ENCODE measurements at regions of chr1 and their contacts with region 1.

Region 1: GRCh38 chr1:218135371-218135770 is 149.7 kb upstream of the RRP15 start:
- DNase-seq: no peak
- ATAC-seq: no peak
- H3K4me3 ChIP-seq: no peak overlapping the region
- H3K4me3 Mint-ChIP-seq: no peak overlapping the region
- H3K27ac ChIP-seq: no peak overlapping the region
- H3K27ac Mint-ChIP-seq: no peak overlapping the region
- H3K4me1 ChIP-seq: no peaks in the 10 kb centered on the region
- H3K4me1 Mint-ChIP-seq: no peaks in the 10 kb centered on the region
- H3K27me3 ChIP-seq: no peaks in the 10 kb centered on the region
- H3K27me3 Mint-ChIP-seq: no peaks in the 10 kb centered on the region
- CTCF ChIP-seq: no peak

Region 2: GRCh38 chr1:217955723-217956122 is 179.6 kb before region 1 on chr1:
- CTCF ChIA-PET with region 1: no interaction called
- POLR2A ChIA-PET with region 1: no interaction called
- intact Hi-C with region 1: no loop called
- DNase-seq: no peak
- ATAC-seq: no peak
- H3K4me3 ChIP-seq: no peak overlapping the region
- H3K4me3 Mint-ChIP-seq: no peak overlapping the region
- H3K27ac ChIP-seq: no peak overlapping the region
- H3K27ac Mint-ChIP-seq: no peak overlapping the region
- H3K4me1 ChIP-seq: no peaks in the 10 kb centered on the region
- H3K4me1 Mint-ChIP-seq: no peaks in the 10 kb centered on the region
- H3K27me3 ChIP-seq: no peaks in the 10 kb centered on the region
- H3K27me3 Mint-ChIP-seq: no peaks in the 10 kb centered on the region
- CTCF ChIP-seq: no peak

Region 3: GRCh38 chr1:218165701-218166114 is 30.3 kb after region 1 on chr1:
- CTCF ChIA-PET with region 1: no interaction called
- POLR2A ChIA-PET with region 1: no interaction called
- intact Hi-C with region 1: loop called in 1 of 2 experiments (anchors 1 kb)
- DNase-seq: no peak
- ATAC-seq: no peak
- H3K4me3 ChIP-seq: peak overlapping the region; percentile 16 to 27
- H3K4me3 Mint-ChIP-seq: peak overlapping the region; percentile 67
- H3K27ac ChIP-seq: no peak overlapping the region
- H3K27ac Mint-ChIP-seq: no peak overlapping the region
- H3K4me1 ChIP-seq: peaks cover 10% of the 10 kb centered on the region
- H3K4me1 Mint-ChIP-seq: peaks cover 15% of the 10 kb centered on the region
- H3K27me3 ChIP-seq: peaks cover 15 to 23% of the 10 kb centered on the region in 2 experiments
- H3K27me3 Mint-ChIP-seq: peaks cover 55% of the 10 kb centered on the region
- CTCF ChIP-seq: no peak

Measured in CD8-positive, alpha-beta T cell (primary cell).